CD4-positive, alpha-beta T cell (primary cell): ENCODE measurements at regions of chr19 and their contacts with region 1.

Region 1: DNA sequence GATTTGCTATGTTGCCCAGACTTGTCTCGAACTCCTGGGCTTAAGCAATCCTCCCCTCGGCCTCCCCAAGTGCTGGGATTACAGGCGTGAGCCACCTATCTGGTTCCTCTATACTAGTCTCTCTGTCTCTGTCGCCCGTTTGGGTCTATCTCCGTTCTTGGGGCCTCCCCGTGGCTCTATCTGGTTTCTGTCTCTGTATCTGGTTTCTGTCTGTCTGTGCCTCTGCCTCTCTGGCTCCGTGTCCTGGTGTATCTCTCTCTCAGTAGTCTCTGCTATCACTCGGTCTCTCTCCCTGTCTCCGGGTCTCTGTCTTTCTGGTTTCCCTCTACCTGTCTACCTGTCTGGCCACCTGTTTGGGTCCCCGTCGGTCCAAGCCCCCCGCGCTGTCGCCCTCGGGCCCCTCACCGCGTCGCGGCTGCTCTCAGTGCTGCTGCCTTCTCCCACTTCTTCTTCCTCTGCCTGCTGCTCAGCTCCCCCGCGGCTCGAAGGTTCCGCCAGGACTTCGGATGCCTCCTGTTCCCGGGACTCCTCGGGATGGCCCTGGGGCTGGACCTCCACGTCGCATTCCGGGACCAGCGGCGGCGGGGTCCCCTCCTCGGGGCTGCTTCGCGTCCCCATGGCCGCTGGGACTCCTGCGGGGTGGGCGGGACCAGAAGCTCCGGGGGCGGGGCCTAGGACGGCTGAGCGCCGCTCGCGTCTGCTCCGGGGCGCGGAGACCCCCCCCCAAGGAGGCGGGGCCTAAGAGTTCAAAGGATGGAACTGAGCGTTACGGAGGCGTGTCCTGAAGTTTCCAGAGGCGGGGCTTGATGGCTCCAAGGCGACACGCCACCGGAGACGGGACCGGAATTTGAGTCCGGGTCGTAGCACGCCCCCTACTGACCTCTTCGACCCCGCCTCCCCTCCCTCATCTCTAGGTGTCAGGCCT is 783 bp downstream of the PHLDB3 start:
- DNase-seq: peak; percentile 98 to 100 (median 99)
- ATAC-seq: peak; percentile 92
- H3K4me3 ChIP-seq: peak overlapping the region; percentile 91
- H3K4me3 Mint-ChIP-seq: peak overlapping the region; percentile 94
- H3K27ac ChIP-seq: peak overlapping the region; percentile 85 to 88
- H3K27ac Mint-ChIP-seq: peak overlapping the region; percentile 96
- H3K4me1 ChIP-seq: peaks cover 35% of the 10 kb centered on the region
- H3K4me1 Mint-ChIP-seq: peaks cover 40% of the 10 kb centered on the region
- H3K27me3 ChIP-seq: no peaks in the 10 kb centered on the region
- H3K27me3 Mint-ChIP-seq: no peaks in the 10 kb centered on the region
- CTCF ChIP-seq: no peak

Region 2: GRCh38 chr19:43438291-43439096 is 65.3 kb before region 1 on chr19:
- CTCF ChIA-PET with region 1: interaction called, 6 read pairs
- POLR2A ChIA-PET with region 1: interaction called, 31 read pairs
- intact Hi-C with region 1: no loop called
- DNase-seq: peak in 7 of 14 experiments; percentile 10 to 34 (median 26)
- ATAC-seq: peak; percentile 37
- H3K4me3 ChIP-seq: no peak overlapping the region
- H3K4me3 Mint-ChIP-seq: peak overlapping the region; percentile 76
- H3K27ac ChIP-seq: peak overlapping the region; percentile 74 to 90
- H3K27ac Mint-ChIP-seq: peak overlapping the region; percentile 96
- H3K4me1 ChIP-seq: peaks cover 41% of the 10 kb centered on the region
- H3K4me1 Mint-ChIP-seq: peaks cover 64% of the 10 kb centered on the region
- H3K27me3 ChIP-seq: no peaks in the 10 kb centered on the region
- H3K27me3 Mint-ChIP-seq: no peaks in the 10 kb centered on the region
- CTCF ChIP-seq: no peak

Region 3: GRCh38 chr19:43474986-43475705 is 28.6 kb before region 1 on chr19:
- CTCF ChIA-PET with region 1: interaction called, 4 read pairs
- POLR2A ChIA-PET with region 1: interaction called, 5 read pairs
- intact Hi-C with region 1: loop called (anchors 1 to 2 kb)
- DNase-seq: peak; percentile 89 to 98 (median 96)
- ATAC-seq: peak; percentile 79
- H3K4me3 ChIP-seq: peak overlapping the region; percentile 59
- H3K4me3 Mint-ChIP-seq: peak overlapping the region; percentile 77
- H3K27ac ChIP-seq: peak overlapping the region; percentile 65 to 93
- H3K27ac Mint-ChIP-seq: peak overlapping the region; percentile 92
- H3K4me1 ChIP-seq: peaks cover 40% of the 10 kb centered on the region
- H3K4me1 Mint-ChIP-seq: peaks cover 36% of the 10 kb centered on the region
- H3K27me3 ChIP-seq: no peaks in the 10 kb centered on the region
- H3K27me3 Mint-ChIP-seq: no peaks in the 10 kb centered on the region
- CTCF ChIP-seq: no peak

Region 4: GRCh38 chr19:43490759-43491158 is 13.0 kb before region 1 on chr19:
- CTCF ChIA-PET with region 1: no interaction called
- POLR2A ChIA-PET with region 1: interaction called, 10 read pairs
- intact Hi-C with region 1: no loop called
- DNase-seq: no peak
- ATAC-seq: no peak
- H3K4me3 ChIP-seq: no peak overlapping the region
- H3K4me3 Mint-ChIP-seq: no peak overlapping the region
- H3K27ac ChIP-seq: no peak overlapping the region
- H3K27ac Mint-ChIP-seq: no peak overlapping the region
- H3K4me1 ChIP-seq: no peaks in the 10 kb centered on the region
- H3K4me1 Mint-ChIP-seq: no peaks in the 10 kb centered on the region
- H3K27me3 ChIP-seq: no peaks in the 10 kb centered on the region
- H3K27me3 Mint-ChIP-seq: no peaks in the 10 kb centered on the region
- CTCF ChIP-seq: no peak

Region 5: DNA sequence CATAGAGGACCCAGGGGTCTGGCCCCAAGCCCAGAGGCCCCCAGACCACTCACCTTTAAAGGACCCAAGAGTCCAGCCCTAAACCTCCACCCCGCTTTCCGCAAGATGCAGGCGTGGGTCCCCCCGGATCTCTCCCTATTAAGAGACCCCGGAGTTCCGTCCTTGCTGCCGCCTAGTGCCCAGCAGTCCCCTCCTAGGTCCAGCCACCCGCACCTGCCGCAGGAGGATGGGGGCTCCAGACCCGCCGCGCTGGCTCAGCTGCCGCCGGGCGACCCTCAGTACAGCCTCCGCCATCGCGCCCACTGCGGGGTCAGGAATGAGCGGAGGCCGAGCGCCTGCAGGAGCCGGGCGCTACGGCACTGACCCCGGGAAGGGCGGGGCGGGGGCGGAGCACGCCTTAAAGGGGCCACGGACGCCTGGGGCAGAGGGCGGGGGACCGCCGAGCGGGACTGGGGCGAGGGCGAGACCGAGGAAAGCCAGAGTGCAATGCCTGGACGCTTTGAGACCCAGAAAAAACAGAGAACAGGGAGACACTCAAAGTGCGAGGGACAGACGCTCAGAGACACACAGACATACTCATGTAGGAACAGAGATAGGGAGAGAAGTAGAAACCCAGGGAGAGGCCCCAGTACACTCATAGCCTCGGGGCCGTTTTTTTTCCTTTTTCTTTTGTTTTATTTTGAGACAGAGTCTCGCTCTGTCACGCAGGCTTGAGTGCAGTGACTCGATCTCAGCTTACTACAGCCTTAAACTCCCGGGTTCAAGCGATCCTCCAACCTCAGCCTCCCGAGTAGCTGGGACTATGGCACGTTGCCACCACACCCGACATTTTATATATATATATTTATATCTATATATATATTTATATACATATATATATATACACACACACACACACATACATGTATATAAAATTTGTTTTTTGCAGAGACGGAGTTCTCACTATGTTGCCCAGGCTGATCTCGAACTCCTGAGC is 23.4 kb after region 1 on chr19 and contains the start of gene ETHE1:
- CTCF ChIA-PET with region 1: interaction called, 4 read pairs
- POLR2A ChIA-PET with region 1: interaction called, 17 read pairs
- intact Hi-C with region 1: no loop called
- DNase-seq: peak; percentile 30 to 81 (median 68)
- ATAC-seq: peak; percentile 67
- H3K4me3 ChIP-seq: peak within 1 kb of the TSS; percentile 93
- H3K4me3 Mint-ChIP-seq: peak within 1 kb of the TSS; percentile 77
- H3K27ac ChIP-seq: peak within 1 kb of the TSS; percentile 66 to 73
- H3K27ac Mint-ChIP-seq: peak within 1 kb of the TSS; percentile 76
- H3K4me1 ChIP-seq: peaks cover 32% of the 10 kb centered on the region
- H3K4me1 Mint-ChIP-seq: peaks cover 28% of the 10 kb centered on the region
- H3K27me3 ChIP-seq: no peaks in the 10 kb centered on the region
- H3K27me3 Mint-ChIP-seq: no peaks in the 10 kb centered on the region
- CTCF ChIP-seq: no peak
- total RNA-seq, gene ETHE1: 20.2 to 21.7 TPM